ENCODE measurements at regions of chr14 and their contacts with region 1.

Region 1: DNA sequence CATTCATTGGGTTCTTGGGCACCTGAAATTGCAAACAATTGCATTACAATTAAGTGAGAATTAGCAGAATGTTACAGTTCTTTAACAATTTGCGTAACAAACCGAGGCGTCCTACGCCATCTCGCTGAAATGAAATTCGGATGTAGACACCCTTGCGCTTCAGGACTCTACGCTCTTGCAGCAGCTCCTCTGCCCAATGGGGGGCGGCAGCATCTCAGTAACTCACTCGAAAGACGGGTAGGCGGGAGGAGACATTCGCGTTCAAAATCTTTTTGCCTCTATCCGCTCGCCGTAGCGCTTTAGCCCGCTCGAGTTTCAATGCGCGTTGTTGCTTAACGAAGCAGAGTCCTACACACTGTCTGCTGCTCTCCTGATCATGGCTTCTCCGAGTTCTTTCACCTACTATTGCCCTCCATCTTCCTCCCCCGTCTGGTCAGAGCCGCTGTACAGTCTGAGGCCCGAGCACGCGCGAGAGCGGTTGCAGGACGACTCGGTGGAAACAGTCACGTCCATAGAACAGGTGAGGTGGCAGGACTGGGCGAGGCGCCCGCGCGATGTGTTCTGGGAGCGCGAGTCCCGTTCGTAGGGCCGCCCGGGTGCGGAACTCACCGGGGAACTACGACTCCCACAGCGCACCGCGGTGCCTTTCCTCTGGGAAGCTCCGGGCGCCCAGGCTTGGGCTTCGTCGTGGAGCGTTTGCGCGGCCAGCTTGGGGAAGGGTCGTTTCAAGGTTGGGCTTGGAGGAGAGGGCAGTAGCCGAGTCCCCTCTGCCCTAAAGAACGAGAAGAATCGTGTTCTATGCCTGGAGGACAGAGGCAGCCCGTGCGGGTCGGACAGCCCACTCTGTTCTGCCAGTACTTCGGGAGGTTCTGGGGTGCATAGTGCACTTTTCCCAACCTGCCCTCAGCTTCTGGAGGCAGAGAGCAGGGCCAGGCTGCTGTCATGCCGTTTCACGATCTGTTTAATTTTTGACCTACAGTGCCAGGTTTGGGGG is at the start of gene FNTB:
- DNase-seq: peak; percentile 99
- ATAC-seq: peak; percentile 98
- total RNA-seq, gene FNTB: 17.1 TPM

Region 2: GRCh38 chr14:64823305-64823861 is 163.5 kb before region 1 on chr14:
- intact Hi-C with region 1: loop called (anchors 2 kb)
- DNase-seq: peak; percentile 91
- ATAC-seq: peak; percentile 88

Region 3: GRCh38 chr14:64919622-64920021 is 67.3 kb before region 1 on chr14:
- intact Hi-C with region 1: loop called (anchors 5 kb)
- DNase-seq: no peak
- ATAC-seq: no peak

Region 4: DNA sequence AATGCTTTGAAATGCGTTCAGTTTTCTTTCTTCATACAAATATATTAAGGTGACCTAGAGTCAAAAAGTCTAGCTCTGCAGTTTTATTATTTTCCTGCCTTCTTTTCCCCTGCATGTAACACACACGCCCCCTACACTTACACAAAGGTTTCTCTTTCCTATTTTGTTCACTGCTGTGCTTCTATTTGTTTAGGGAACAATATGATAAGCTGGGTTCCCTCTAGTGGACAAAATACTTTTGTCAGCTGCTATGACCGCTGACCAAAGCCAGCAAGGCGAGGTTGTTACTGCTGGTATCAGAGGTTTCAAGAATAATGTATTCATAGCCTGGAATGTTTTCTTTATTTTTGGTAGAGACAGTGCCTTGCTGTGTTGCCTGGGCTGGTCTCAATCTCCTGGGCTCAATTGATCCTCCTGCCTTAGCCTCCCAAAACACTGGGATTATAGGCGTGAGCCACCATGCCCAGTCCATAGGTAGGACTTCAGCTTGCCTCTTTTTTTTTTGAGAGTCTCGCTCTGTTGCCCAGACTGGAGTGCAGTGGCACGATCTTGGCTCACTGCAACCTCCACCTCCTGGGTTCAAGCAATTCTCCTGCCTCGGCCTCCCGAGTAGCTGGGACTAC is 33.2 kb after region 1 on chr14:
- intact Hi-C with region 1: loop called (anchors 5 kb)
- DNase-seq: no peak
- ATAC-seq: peak; percentile 92

Region 5: DNA sequence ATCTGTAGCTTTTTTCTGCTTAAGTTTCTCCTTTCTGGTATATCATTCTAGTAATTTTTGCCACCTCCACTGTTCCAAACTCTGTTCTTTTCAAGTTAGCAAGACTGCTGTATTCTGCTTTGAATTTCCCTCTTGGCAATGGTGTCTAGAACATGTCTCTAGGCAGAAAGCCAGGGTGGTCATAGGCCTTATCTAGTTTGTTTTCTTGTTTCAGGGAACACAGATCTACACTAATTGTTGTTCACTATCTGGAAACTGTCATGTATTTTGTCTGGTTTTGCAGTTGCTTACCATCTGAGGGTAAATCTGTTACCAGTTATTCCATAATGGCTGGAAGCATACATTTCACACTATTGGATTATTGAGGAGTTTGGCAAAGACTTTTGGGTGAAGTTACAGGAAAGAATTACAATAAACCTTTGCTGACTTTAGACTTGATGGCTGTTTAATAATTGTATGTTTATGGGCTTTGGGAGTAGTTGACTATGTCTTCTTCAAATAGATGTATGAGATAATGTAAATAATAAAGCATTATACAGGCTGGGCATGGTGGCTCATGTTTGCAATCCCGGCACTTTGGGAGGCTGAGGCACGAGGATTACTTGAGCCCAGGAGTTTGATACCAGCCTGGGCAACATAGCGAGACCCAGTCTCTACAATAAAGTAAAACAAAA is 467.1 kb after region 1 on chr14:
- intact Hi-C with region 1: no loop called
- DNase-seq: no peak
- ATAC-seq: no peak

Measured in Right ventricle myocardium inferior (tissue), 1 donor.